Natural killer cell (primary cell): ENCODE measurements at regions of chr1 and their contacts with region 1.

Region 1: DNA sequence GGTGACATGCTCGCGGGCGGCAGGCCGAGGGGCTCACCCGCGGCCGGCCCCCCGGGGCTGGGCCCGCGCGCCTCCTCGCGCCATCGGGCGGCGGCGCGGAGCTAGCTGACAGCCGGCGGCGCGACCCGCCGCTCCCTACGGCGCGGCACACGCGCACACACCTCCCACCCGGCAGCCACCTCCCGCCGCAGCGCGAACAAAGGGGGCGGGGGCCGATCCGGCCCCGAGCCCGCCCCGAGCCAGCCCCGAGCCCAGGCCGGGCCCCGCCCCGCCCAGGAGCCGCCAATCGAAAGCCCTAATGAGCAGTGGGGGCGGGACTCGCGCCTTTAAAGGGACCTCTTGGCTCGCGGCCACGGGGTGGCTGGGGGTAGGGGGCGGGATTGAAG is at the start of gene KIF21B:
- DNase-seq: peak; percentile 93 to 94
- ATAC-seq: peak; percentile 81 to 94 (median 84)
- H3K4me3 ChIP-seq: peak within 1 kb of the TSS; percentile 68
- H3K4me3 Mint-ChIP-seq: peak within 1 kb of the TSS; percentile 98
- H3K27ac ChIP-seq: peak within 1 kb of the TSS; percentile 80
- H3K27ac Mint-ChIP-seq: peak within 1 kb of the TSS; percentile 98 to 99
- H3K4me1 ChIP-seq: peaks cover 69% of the 10 kb centered on the region
- H3K4me1 Mint-ChIP-seq: peaks cover 49 to 61% of the 10 kb centered on the region in 2 donors
- H3K27me3 ChIP-seq: no peaks in the 10 kb centered on the region
- H3K27me3 Mint-ChIP-seq: no peaks in the 10 kb centered on the region
- CTCF ChIP-seq: no peak
- total RNA-seq, gene KIF21B: 102 to 129 (median 126) TPM

Region 2: GRCh38 chr1:201042779-201043461 is 19.4 kb after region 1 on chr1:
- intact Hi-C with region 1: no loop called
- DNase-seq: peak; percentile 57 to 88
- ATAC-seq: peak; percentile 80 to 99 (median 94)
- H3K4me3 ChIP-seq: no peak overlapping the region
- H3K4me3 Mint-ChIP-seq: no peak overlapping the region
- H3K27ac ChIP-seq: no peak overlapping the region
- H3K27ac Mint-ChIP-seq: no peak overlapping the region
- H3K4me1 ChIP-seq: peaks cover 4% of the 10 kb centered on the region
- H3K4me1 Mint-ChIP-seq: peaks cover 0 to 5% of the 10 kb centered on the region in 2 donors
- H3K27me3 ChIP-seq: no peaks in the 10 kb centered on the region
- H3K27me3 Mint-ChIP-seq: peaks cover 0 to 6% of the 10 kb centered on the region in 2 donors
- CTCF ChIP-seq: peak; percentile 86

Region 3: GRCh38 chr1:201096035-201096434 is 72.5 kb after region 1 on chr1:
- intact Hi-C with region 1: no loop called
- DNase-seq: no peak
- ATAC-seq: no peak
- H3K4me3 ChIP-seq: no peak overlapping the region
- H3K4me3 Mint-ChIP-seq: no peak overlapping the region
- H3K27ac ChIP-seq: no peak overlapping the region
- H3K27ac Mint-ChIP-seq: no peak overlapping the region
- H3K4me1 ChIP-seq: no peaks in the 10 kb centered on the region
- H3K4me1 Mint-ChIP-seq: no peaks in the 10 kb centered on the region
- H3K27me3 ChIP-seq: no peaks in the 10 kb centered on the region
- H3K27me3 Mint-ChIP-seq: peaks cover 8 to 11% of the 10 kb centered on the region in 2 donors
- CTCF ChIP-seq: no peak

Region 4: GRCh38 chr1:201154389-201155165 is 131.1 kb after region 1 on chr1 and contains the start of gene TMEM9:
- intact Hi-C with region 1: loop called (anchors 5 kb)
- DNase-seq: peak; percentile 98 to 99
- ATAC-seq: peak; percentile 94 to 96 (median 96)
- H3K4me3 ChIP-seq: peak within 1 kb of the TSS; percentile 56
- H3K4me3 Mint-ChIP-seq: peak within 1 kb of the TSS; percentile 91
- H3K27ac ChIP-seq: no peak within 1 kb of the TSS
- H3K27ac Mint-ChIP-seq: peak within 1 kb of the TSS; percentile 75 to 83
- H3K4me1 ChIP-seq: peaks cover 14% of the 10 kb centered on the region
- H3K4me1 Mint-ChIP-seq: peaks cover 13 to 24% of the 10 kb centered on the region in 2 donors
- H3K27me3 ChIP-seq: no peaks in the 10 kb centered on the region
- H3K27me3 Mint-ChIP-seq: peaks cover 14 to 17% of the 10 kb centered on the region in 2 donors
- CTCF ChIP-seq: no peak
- total RNA-seq, gene TMEM9: 16.2 to 18.1 (median 16.9) TPM